ENCODE measurements at regions of chr12 and their contacts with region 1.

Region 1: GRCh38 chr12:105382771-105383622 is 52.5 kb downstream of the C12orf75 start:
- DNase-seq: peak; percentile 84
- H3K4me3 ChIP-seq: peak overlapping the region; percentile 24 to 62 (median 34)
- H3K27ac ChIP-seq: peak overlapping the region; percentile 73
- H3K4me1 ChIP-seq: peaks cover 13% of the 10 kb centered on the region
- H3K27me3 ChIP-seq: no peaks in the 10 kb centered on the region
- CTCF ChIP-seq: peak; percentile 43 to 65
- POLR2A ChIP-seq: no peak

Region 2: GRCh38 chr12:105164068-105164467 is 218.9 kb before region 1 on chr12:
- CTCF ChIA-PET with region 1: interaction called, 22 read pairs
- POLR2A ChIA-PET with region 1: no interaction called
- dilution Hi-C with region 1: no loop called
- intact Hi-C with region 1: loop called (anchors 2 kb)
- DNase-seq: no peak
- H3K4me3 ChIP-seq: no peak overlapping the region
- H3K27ac ChIP-seq: no peak overlapping the region
- H3K4me1 ChIP-seq: no peaks in the 10 kb centered on the region
- H3K27me3 ChIP-seq: no peaks in the 10 kb centered on the region
- CTCF ChIP-seq: no peak
- POLR2A ChIP-seq: no peak

Region 3: DNA sequence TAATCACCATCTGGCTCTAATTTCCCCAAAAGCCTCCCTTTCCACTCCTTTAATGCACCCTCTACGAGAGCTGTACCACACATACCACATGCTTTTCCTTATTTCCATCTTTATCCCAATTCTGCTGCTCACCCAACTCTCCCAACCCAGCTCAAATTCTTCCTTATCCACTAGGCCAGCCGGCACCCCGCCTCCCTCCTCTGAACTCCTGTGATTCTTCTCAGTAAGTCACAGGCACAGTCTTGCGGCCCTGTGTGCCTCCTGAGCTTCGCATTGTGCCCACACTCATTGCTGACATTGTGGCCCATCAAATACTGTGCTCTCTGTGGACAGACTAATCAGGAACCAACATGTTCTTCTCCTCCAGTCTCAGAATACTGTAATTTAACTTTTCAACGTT is 192.5 kb before region 1 on chr12:
- CTCF ChIA-PET with region 1: interaction called, 12 read pairs
- POLR2A ChIA-PET with region 1: no interaction called
- dilution Hi-C with region 1: no loop called
- intact Hi-C with region 1: no loop called
- DNase-seq: no peak
- H3K4me3 ChIP-seq: no peak overlapping the region
- H3K27ac ChIP-seq: no peak overlapping the region
- H3K4me1 ChIP-seq: no peaks in the 10 kb centered on the region
- H3K27me3 ChIP-seq: no peaks in the 10 kb centered on the region
- CTCF ChIP-seq: no peak
- POLR2A ChIP-seq: no peak

Region 4: DNA sequence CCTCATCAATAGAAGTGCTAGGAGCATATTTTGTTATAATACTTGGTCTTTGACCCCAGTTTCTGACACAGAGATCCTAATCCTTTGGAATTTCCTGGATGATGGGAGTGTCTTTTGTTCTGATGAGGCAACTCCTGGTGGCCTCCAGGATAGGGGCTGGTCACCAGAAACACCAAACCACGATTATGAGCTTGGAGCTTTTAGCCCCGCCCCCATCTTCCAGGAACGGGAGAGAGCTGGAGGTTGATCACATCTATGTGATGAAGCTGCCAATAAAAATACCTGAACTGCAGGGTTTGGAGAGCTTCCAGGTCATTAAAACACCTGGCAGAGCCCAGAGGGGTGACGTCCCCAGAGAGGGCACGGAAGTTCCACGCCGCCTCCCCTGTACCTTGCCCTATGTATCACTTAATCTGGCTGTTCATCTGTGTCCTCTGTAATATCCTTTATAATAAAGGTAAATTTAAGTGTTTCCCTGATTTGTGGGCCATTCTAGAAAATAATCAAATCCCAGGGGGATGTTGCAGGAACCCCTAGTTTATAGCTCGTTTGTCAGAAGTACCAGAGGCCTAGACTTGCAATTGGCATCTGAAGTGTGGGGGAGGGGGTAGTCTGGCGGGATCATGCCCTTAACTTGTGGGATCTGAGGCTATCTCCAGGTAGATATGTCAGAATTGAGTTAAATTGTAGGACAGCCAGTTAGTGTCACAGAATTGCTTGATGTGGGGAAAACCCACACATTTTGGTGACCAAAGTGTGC is 168.2 kb before region 1 on chr12:
- CTCF ChIA-PET with region 1: interaction called, 15 read pairs
- POLR2A ChIA-PET with region 1: interaction called, 3 read pairs
- dilution Hi-C with region 1: no loop called
- intact Hi-C with region 1: no loop called
- DNase-seq: peak; percentile 45
- H3K4me3 ChIP-seq: no peak overlapping the region
- H3K27ac ChIP-seq: peak overlapping the region; percentile 62
- H3K4me1 ChIP-seq: peaks cover 13% of the 10 kb centered on the region
- H3K27me3 ChIP-seq: no peaks in the 10 kb centered on the region
- CTCF ChIP-seq: peak in 1 of 2 donors; percentile 3
- POLR2A ChIP-seq: no peak

Region 5: DNA sequence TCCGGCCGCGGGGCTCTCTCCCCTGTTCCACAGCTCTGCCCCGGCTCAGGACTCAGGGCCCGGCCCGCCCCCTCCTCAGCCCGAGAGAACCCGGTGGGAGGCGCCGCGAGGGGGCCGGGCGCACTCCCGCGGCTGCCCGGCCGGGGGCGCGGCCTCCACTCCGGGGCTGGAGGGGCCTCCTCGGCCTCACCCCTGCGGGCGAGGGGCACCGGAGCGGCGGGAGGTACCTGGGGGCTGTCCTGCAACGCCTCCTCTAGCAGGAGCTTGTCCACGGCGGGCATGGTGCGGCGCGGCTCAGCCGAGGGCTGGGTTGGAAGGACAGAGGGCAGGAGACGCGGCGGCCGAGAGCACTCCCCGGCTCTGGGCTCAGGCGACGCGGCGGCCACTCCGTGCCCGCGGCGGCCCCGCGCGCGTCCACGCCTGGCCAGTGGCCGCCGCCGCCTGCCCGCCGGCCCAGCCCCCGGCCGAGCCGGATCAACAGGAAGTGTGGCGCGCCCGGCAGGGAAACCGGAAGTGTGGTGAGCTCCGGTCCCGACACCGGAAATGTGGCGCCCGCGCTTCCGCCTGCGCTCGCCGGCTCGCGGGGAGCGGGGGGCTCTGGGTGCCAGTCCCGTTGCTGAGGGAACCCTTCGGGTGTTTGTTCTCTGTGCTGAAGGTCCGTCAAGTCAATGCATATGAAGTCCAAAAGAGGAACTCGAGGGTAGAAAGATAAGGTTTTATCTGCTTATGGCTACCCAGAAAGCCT is 147.1 kb before region 1 on chr12 and contains the start of gene APPL2:
- CTCF ChIA-PET with region 1: interaction called, 20 read pairs
- POLR2A ChIA-PET with region 1: no interaction called
- dilution Hi-C with region 1: no loop called
- intact Hi-C with region 1: loop called (anchors 1 kb)
- DNase-seq: peak; percentile 87
- H3K4me3 ChIP-seq: peak within 1 kb of the TSS; percentile 55 to 98 (median 96)
- H3K27ac ChIP-seq: peak within 1 kb of the TSS; percentile 95
- H3K4me1 ChIP-seq: peaks cover 28% of the 10 kb centered on the region
- H3K27me3 ChIP-seq: no peaks in the 10 kb centered on the region
- CTCF ChIP-seq: peak; percentile 19 to 23
- POLR2A ChIP-seq: peak; percentile 87
- total RNA-seq, gene APPL2: 21.4 and 31.8 TPM in 2 replicates

Region 6: GRCh38 chr12:105330283-105330930 is 52.6 kb before region 1 on chr12 and contains the start of gene C12orf75:
- CTCF ChIA-PET with region 1: interaction called, 5 read pairs
- POLR2A ChIA-PET with region 1: no interaction called
- dilution Hi-C with region 1: no loop called
- intact Hi-C with region 1: loop called (anchors 2 kb)
- DNase-seq: peak; percentile 71
- H3K4me3 ChIP-seq: peak within 1 kb of the TSS; percentile 59 to 88 (median 83)
- H3K27ac ChIP-seq: no peak within 1 kb of the TSS
- H3K4me1 ChIP-seq: peaks cover 39% of the 10 kb centered on the region
- H3K27me3 ChIP-seq: no peaks in the 10 kb centered on the region
- CTCF ChIP-seq: no peak
- POLR2A ChIP-seq: no peak
- total RNA-seq, gene C12orf75: 60.7 and 73.6 TPM in 2 replicates

Measured in endothelial cell of umbilical vein (primary cell).